AG04449 (cell line): ENCODE measurements at regions of chr20 and their contacts with region 1.

Region 1: DNA sequence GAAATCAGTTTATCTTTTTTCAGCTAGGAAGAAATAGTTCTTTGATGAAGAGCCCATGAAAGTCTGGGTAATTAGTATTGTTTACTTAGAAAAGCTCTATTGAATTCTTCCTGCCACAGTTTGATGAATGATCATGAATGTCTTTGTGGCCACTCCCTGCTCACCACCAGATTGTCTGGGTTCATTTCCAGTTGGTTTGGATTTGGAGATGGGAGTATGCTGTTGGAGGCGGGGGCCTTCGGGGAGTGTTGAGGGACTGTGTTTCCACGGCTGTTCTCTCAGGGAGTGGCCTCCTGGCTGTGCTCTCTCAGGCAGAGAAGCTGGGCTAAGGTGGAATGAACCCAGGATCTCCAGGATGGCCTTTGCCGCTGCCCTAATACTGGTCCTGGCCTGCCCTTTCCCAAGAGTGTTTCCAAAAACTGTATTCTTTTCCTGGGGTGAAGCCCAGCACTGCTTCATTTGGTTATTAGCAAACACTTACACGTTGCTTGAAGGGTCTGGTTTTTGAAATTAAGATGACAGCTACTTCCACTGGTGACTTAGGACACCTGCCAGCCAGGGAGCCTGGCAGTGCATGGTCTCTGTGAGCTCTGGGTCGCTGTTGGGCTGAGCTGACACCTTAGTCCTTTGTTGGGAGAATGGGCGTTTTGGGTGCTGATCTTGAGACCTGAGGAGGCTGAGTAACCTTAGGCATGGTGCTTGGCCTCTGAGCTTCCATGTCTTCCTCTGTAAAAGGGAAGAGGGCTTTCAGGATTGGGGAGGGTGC is 23.2 kb downstream of the PRPF6 start:
- DNase-seq: no peak
- H3K4me3 ChIP-seq: no peak overlapping the region
- CTCF ChIP-seq: no peak

Region 2: GRCh38 chr20:63980806-63981728 is 23.1 kb before region 1 on chr20 and contains the start of gene PRPF6:
- CTCF ChIA-PET with region 1: interaction called, 11 read pairs
- POLR2A ChIA-PET with region 1: no interaction called
- DNase-seq: peak; percentile 44
- H3K4me3 ChIP-seq: peak within 1 kb of the TSS; percentile 99
- CTCF ChIP-seq: peak; percentile 97

Region 3: GRCh38 chr20:64111841-64112641 is 107.9 kb after region 1 on chr20:
- CTCF ChIA-PET with region 1: no interaction called
- POLR2A ChIA-PET with region 1: no interaction called
- DNase-seq: no peak
- H3K4me3 ChIP-seq: no peak overlapping the region
- CTCF ChIP-seq: no peak